Left cardiac atrium (tissue), 4 donors: ENCODE measurements at regions of chr12 and their contacts with region 1.

Region 1: GRCh38 chr12:106136263-106136662 is 2.5 kb downstream of the NUAK1 start:
- DNase-seq: peak; percentile 90
- ATAC-seq: peak; percentile 3

Region 2: GRCh38 chr12:105420659-105421240 is 715.5 kb before region 1 on chr12:
- intact Hi-C with region 1: loop called (anchors 2 to 10 kb)
- DNase-seq: peak; percentile 75
- ATAC-seq: peak; percentile 87 to 90

Region 3: GRCh38 chr12:105451211-105451610 is 685.1 kb before region 1 on chr12:
- intact Hi-C with region 1: no loop called
- DNase-seq: no peak
- ATAC-seq: no peak

Region 4: DNA sequence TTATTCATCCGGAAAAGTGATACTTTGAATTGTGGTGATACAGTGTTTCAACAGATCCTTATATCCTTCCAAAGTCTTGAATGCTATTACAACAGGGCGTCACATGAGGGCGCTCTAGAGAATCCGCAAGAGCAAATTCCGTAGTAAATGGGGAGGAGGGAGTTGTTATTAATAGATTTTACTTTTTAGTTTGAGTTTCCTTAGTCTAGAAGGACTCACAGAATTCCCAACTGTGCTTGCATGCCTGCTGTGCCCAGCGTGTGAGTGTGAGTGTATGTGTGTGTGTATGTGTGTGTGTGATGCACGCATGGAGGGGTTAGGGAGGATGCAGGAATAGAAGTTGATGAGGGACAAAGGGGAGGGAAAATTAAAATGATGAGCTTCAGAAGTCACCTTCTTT is 430.5 kb before region 1 on chr12:
- intact Hi-C with region 1: loop called (anchors 2 to 10 kb)
- DNase-seq: peak; percentile 56
- ATAC-seq: peak; percentile 53 to 66

Region 5: DNA sequence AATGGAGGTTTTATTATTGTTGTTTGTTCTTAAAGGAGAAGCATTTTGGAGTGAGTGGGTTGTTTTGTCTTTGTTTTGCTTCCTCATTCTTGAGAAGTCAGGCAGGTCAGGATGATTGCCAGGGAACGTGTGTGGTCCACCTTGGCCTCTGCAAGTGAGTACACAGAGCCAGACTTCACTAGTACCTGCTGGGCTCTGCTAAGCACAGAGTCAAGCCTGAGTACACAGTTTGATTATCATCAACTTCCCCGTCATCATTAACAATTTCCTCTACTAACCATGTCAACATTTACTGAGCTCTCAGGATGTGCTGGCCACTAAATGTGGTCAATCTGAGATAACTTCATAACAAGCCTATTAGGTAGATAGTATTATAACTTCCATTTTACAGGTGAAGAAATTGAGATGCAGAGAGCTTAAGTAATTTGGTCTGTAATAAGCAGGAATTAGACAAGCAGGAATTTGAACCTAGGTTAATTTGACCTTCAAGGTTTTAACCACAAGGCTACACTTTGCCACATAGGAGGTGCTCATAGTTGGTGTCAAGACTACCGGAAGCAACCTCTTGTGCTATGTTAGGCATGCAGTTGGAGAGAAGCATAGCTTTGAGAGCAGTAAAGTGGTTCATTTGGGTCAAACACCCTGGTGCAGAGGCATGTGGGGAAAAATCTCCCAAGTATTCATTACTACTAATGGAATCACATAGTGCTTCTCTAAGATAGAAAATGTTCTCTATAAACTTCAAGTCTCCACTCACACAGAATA is 175.8 kb before region 1 on chr12:
- intact Hi-C with region 1: loop called in 1 of 2 experiments (anchors 10 kb)
- DNase-seq: no peak
- ATAC-seq: peak in 1 of 2 donors; percentile 51

Region 6: GRCh38 chr12:106078358-106079010 is 57.8 kb before region 1 on chr12:
- intact Hi-C with region 1: loop called in 1 of 2 experiments (anchors 10 kb)
- DNase-seq: peak; percentile 72
- ATAC-seq: peak; percentile 75 to 90

Region 7: DNA sequence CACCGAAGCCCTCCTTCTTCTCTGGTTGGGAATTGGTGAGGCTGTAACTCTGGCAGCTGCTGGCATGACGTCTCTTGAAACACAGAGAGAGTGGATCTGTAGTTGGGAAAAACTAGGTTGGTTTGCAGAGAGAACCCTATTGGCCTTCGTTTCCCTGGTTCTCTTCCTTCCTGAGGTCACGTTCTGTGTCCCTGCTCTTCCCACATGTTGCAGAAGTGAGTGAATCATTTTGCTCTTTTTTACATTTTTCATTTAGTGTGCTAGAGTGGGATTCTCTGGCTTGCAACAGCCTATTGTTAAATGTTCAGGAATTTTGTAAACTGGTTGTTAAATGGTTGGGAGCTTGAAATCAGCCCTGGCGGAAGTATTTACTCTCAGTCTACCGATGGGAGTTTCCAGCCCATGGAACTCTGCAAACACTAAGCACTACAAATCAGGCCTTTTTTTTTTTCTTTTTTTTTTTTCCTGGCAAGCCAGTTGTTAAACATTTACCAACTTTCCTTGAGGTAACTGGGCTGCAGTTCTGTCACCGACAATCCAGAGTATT is 138.4 kb after region 1 on chr12:
- intact Hi-C with region 1: no loop called
- DNase-seq: no peak
- ATAC-seq: no peak

Region 8: DNA sequence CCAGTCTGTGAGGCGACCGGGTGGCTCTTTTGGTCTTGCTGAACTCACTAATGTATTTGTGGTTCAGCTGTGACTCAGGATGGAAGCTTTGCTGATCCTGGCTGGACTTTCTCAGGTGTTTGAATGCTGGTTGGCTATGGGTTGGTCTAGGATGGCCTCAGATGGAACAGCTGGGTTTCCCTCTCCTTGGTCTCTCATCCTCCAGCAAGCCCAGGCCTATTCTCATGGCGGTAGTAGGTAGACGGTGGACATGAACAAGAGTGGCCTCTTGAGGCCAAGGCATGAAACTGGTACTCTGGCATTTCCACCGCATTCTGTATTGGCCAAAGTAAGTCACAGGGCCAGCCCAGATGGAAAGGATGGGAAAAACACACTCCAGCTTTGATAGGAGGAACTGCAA is 209.5 kb after region 1 on chr12:
- intact Hi-C with region 1: loop called in 1 of 2 experiments (anchors 10 kb)
- DNase-seq: no peak
- ATAC-seq: peak; percentile 52 to 56